ENCODE measurements at regions of chr12 and their contacts with region 1.

Region 1: DNA sequence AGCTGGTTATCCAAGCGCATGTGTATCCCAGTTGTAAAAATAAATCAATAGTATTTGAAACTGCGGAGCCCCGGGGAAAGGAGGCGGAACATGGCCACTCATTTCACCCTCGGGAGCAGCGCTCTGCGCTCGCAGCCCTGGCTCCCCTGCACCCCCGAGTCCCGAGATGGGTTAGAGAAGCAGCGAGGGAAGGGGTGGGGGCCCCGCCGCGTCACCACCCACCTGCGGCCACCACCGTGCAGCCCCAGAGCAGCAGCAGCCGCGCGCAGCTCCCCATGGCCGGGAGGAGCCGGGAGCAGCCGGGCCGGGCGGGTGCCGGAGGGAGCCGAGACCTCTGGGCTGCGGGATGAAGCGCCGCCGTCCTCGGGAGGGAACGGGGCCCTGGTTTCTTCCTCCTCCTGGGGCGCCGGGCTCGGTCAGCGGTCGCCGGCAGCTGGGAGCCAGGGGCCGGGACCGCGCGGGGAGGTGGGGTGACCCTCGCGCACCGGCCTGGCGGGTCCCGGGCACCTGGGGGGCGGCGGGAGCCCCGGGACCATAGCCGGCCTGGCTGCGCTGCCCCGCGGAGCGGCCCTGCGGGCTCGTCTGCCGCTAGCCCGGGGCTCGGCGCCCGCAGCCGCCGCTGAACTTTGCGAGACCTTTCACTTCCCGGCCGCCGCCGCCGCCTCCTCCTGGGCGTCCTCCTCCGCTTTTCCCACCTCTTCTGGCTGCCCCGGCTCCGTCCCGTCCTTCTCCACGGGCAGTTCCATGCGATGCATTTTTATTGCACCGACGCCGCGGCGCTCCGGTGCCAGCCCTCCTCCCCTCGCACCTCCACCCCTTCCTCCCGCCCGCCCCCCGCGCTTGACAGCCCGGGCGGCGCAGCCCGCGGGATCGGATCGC is at the start of gene NTN4:
- DNase-seq: peak; percentile 62 to 82 (median 69)
- ATAC-seq: peak; percentile 37 to 80 (median 64)
- H3K4me3 ChIP-seq: peak within 1 kb of the TSS; percentile 66 to 94 (median 88)
- H3K27ac ChIP-seq: peak within 1 kb of the TSS; percentile 75 to 93 (median 88)
- H3K4me1 ChIP-seq: peaks cover 5 to 49% (median 29%) of the 10 kb centered on the region in 12 donors
- H3K27me3 ChIP-seq: peaks cover 0 to 39% (median 0%) of the 10 kb centered on the region in 9 donors
- CTCF ChIP-seq: no peak
- POLR2A ChIP-seq: peak in 1 of 2 donors; percentile 41
- total RNA-seq, gene NTN4: 58.4 to 116 (median 71.5) TPM

Region 2: GRCh38 chr12:95593266-95593871 is 196.9 kb before region 1 on chr12:
- intact Hi-C with region 1: loop called in 1 of 10 experiments (anchors 5 kb)
- DNase-seq: peak in 4 of 5 donors; percentile 76 to 84 (median 80)
- ATAC-seq: peak; percentile 91 to 98 (median 96)
- H3K4me3 ChIP-seq: no peak overlapping the region
- H3K27ac ChIP-seq: peak overlapping the region in 8 of 12 donors; percentile 28 to 73 (median 58)
- H3K4me1 ChIP-seq: peaks cover 0 to 19% (median 10%) of the 10 kb centered on the region in 12 donors
- H3K27me3 ChIP-seq: no peaks in the 10 kb centered on the region
- CTCF ChIP-seq: no peak
- POLR2A ChIP-seq: no peak

Region 3: GRCh38 chr12:95717974-95718431 is 72.3 kb before region 1 on chr12:
- intact Hi-C with region 1: loop called in 1 of 10 experiments (anchors 10 kb)
- DNase-seq: no peak
- ATAC-seq: peak in 1 of 4 donors; percentile 68
- H3K4me3 ChIP-seq: no peak overlapping the region
- H3K27ac ChIP-seq: peak overlapping the region in 5 of 12 donors; percentile 19 to 52 (median 26)
- H3K4me1 ChIP-seq: peaks cover 0 to 34% (median 17%) of the 10 kb centered on the region in 12 donors
- H3K27me3 ChIP-seq: no peaks in the 10 kb centered on the region
- CTCF ChIP-seq: no peak
- POLR2A ChIP-seq: no peak

Region 4: GRCh38 chr12:95739561-95740313 is 50.5 kb before region 1 on chr12:
- intact Hi-C with region 1: loop called in 1 of 10 experiments (anchors 5 kb)
- DNase-seq: peak; percentile 61 to 87 (median 70)
- ATAC-seq: peak; percentile 84 to 92 (median 88)
- H3K4me3 ChIP-seq: peak overlapping the region in 4 of 12 donors; percentile 3 to 23 (median 4)
- H3K27ac ChIP-seq: peak overlapping the region; percentile 78 to 95 (median 86)
- H3K4me1 ChIP-seq: peaks cover 0 to 64% (median 38%) of the 10 kb centered on the region in 12 donors
- H3K27me3 ChIP-seq: no peaks in the 10 kb centered on the region
- CTCF ChIP-seq: no peak
- POLR2A ChIP-seq: no peak

Region 5: DNA sequence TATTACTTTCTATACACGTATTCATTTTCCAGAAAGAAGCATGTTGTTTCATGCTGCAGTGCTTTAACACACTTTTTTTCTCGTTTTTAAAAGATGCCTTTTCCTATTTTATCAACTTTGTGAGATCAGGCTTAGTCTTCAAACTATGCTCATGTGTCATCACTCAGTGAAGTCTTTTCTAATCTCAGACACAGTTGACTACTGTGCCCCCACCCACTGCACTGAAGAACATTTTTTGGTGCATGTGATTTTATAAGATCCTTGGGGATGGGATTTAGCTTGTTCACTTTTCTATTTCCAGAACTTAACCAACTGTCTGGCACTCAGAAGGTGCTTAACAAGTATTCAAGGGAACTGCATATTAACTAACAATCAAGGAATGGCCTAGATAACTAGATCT is 524.5 kb after region 1 on chr12:
- intact Hi-C with region 1: no loop called
- DNase-seq: no peak
- ATAC-seq: peak in 1 of 4 donors; percentile 46
- H3K4me3 ChIP-seq: no peak overlapping the region
- H3K27ac ChIP-seq: peak overlapping the region in 1 of 12 donors; percentile 4
- H3K4me1 ChIP-seq: peaks cover 0 to 15% (median 5%) of the 10 kb centered on the region in 12 donors
- H3K27me3 ChIP-seq: no peaks in the 10 kb centered on the region
- CTCF ChIP-seq: no peak
- POLR2A ChIP-seq: no peak

Measured in heart left ventricle (tissue), 16 donors.